Natural killer cell (primary cell): ENCODE measurements at regions of chr15 and their contacts with region 1.

Region 1: DNA sequence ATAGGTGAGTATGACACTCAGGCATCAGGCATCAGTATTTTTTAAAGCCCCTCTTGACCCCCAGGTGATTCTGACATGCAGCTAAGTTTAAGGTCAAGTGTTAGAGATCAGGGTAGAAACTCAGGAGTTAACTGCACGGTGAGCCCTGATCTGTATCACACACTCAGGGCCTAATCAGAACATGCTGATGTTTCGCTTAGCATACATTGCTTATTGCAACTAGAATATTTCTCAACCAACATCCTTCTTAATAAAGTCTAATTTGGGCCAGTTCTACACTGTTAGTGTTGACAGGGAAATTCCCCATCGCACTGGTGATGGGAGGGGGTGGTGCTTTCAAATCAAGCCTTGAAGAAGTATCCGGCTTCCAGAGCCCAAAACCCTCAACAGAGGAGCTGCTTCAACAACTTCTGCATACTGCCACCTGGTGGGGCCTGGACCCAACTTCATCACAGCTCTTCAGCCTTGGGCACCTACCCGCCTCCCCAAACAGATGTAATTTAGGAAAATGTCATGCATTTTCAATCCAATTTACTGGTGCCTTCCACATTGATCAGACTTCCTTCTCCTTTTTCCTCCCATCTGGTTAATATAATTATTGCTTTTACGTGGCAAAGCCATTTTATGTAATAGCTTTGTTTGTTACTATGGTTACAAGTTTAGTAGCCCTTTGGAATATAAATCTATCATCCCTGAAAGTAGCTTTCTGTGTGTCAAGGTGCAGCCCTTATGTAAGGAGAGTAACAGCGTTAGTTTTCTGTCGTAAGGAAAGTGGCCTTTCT is 312.2 kb downstream of the RORA start:
- DNase-seq: peak; percentile 76 to 96
- ATAC-seq: peak; percentile 94 to 98 (median 96)
- H3K4me3 ChIP-seq: no peak overlapping the region
- H3K4me3 Mint-ChIP-seq: no peak overlapping the region
- H3K27ac ChIP-seq: peak overlapping the region; percentile 12
- H3K27ac Mint-ChIP-seq: peak overlapping the region; percentile 82 to 83
- H3K4me1 ChIP-seq: peaks cover 7% of the 10 kb centered on the region
- H3K4me1 Mint-ChIP-seq: peaks cover 8 to 13% of the 10 kb centered on the region in 2 donors
- H3K27me3 ChIP-seq: no peaks in the 10 kb centered on the region
- H3K27me3 Mint-ChIP-seq: no peaks in the 10 kb centered on the region
- CTCF ChIP-seq: peak; percentile 88

Region 2: DNA sequence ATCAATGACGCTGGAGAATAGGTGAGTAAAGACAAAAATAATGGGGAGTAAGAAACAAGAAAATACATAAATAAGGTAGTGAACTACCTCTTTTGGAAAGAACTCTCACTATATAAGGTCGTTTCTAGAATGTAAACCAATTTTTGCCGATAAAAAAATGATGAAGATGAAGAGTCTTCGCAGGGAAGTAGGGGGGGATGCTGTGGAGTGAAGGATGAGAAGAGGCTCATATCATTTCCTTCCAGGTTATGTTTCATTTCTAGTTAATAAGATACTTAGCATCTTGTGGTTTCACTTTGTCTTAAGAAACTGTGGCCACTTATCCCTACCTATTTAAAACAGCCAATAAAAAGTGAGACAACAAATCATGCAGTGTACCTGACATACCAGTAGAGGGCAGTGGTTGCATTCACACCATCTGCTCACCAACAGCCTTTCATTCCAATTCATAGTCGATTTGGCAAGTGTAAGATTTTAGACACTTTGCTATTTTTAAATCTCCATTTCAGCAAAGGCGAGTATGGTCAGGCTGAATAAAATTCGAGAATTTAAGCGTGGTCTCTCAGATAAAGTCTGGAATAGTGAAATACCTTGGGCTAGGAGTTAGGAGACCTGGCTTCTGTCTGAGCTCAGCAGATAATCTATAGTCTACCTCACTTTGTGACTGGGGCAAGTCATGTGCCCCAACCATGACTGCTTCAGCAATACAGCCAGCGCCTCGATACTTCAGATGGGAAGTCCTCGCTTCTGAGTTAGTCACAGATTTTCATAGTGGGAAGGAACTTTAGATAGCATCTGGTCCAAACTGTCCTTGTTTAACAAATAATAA is 409.1 kb before region 1 on chr15:
- intact Hi-C with region 1: loop called (anchors 1 kb)
- DNase-seq: peak in 1 of 2 donors; percentile 89
- ATAC-seq: peak; percentile 93 to 94 (median 93)
- H3K4me3 ChIP-seq: no peak overlapping the region
- H3K4me3 Mint-ChIP-seq: peak overlapping the region; percentile 38
- H3K27ac ChIP-seq: peak overlapping the region; percentile 2
- H3K27ac Mint-ChIP-seq: peak overlapping the region; percentile 85 to 86
- H3K4me1 ChIP-seq: peaks cover 3% of the 10 kb centered on the region
- H3K4me1 Mint-ChIP-seq: peaks cover 25 to 50% of the 10 kb centered on the region in 2 donors
- H3K27me3 ChIP-seq: no peaks in the 10 kb centered on the region
- H3K27me3 Mint-ChIP-seq: no peaks in the 10 kb centered on the region
- CTCF ChIP-seq: peak; percentile 91

Region 3: DNA sequence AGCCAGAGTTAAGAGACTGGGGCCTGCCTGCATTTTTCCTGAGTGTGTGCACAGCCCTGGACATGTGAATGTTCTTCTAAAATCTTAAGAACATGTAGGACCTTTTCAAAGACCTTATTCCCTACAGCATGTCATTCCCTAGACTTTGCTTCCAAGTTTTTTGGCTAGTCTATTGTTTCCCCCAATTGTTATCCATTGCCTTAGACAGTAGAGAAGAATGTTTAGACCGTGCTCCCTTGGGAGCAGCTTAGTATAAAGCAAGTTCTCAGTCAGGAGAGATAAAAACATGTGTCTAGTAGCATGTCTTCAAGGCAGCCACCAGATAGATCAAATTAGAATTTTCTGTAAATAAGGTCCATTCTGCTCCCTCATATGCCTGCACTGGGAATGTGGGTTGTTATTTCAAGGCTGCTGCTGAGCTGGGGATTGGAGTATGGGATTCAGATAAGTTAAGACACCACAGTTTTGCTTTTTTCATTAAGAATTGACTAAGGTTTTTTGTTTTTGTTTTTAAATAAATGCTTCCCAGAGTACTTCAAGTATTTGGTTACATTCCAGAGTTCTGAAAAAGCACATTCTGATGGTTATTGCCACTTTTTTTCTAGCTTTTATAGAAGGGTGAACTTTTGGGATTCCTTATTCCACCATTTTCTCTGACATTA is 65.5 kb after region 1 on chr15:
- intact Hi-C with region 1: no loop called
- DNase-seq: no peak
- ATAC-seq: no peak
- H3K4me3 ChIP-seq: no peak overlapping the region
- H3K4me3 Mint-ChIP-seq: no peak overlapping the region
- H3K27ac ChIP-seq: no peak overlapping the region
- H3K27ac Mint-ChIP-seq: no peak overlapping the region
- H3K4me1 ChIP-seq: no peaks in the 10 kb centered on the region
- H3K4me1 Mint-ChIP-seq: no peaks in the 10 kb centered on the region
- H3K27me3 ChIP-seq: peaks cover 7% of the 10 kb centered on the region
- H3K27me3 Mint-ChIP-seq: peaks cover 22 to 55% of the 10 kb centered on the region in 2 donors
- CTCF ChIP-seq: no peak